HEK293 (cell line): ENCODE measurements at regions of chr7 and their contacts with region 1.

Region 1: GRCh38 chr7:56033671-56034432 is 17.4 kb downstream of the PSPH start:
- H3K4me3 ChIP-seq: peak overlapping the region; percentile 55
- H3K27ac ChIP-seq: peak overlapping the region; percentile 57
- H3K4me1 ChIP-seq: no peaks in the 10 kb centered on the region
- CTCF ChIP-seq: no peak

Region 2: DNA sequence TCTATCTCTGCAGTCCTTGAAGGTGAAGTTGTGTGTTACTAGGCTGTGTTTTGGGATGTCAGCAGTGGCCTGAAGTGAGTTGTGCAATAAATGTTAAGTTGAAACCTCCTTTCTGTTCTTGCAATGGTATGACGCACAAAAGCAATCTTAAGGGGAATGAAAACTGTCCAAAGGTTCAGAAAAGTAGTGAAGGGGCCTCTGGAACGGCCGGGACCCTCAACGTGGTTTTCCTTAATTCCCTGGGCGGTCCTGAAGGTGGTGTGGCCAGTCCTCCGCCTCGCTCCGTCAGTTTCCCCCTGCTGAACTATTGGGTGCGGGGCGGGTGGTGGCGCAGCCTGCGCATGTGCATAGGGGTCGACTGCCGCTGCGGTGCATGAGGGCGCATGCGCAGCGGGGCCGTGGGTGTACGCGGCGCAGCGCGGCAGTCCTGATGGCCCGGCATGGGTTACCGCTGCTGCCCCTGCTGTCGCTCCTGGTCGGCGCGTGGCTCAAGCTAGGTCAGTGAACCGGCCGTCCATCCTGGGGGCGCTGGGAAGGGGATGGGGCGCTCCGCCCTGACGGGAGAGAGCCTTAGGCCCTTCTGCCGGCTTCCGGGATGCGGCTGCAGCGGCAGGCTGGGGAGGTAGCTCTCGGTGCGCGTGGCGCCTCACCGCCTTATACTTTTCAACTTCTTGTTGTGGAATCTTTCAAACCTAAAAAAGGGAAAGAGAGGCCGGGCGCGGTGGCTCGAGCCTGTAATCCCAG is 30.2 kb after region 1 on chr7 and contains the start of gene SUMF2:
- CTCF ChIA-PET with region 1: no interaction called
- POLR2A ChIA-PET with region 1: interaction called, 17 read pairs
- H3K4me3 ChIP-seq: peak within 1 kb of the TSS; percentile 90
- H3K27ac ChIP-seq: peak within 1 kb of the TSS; percentile 76
- H3K4me1 ChIP-seq: peaks cover 11% of the 10 kb centered on the region
- CTCF ChIP-seq: peak; percentile 82

Region 3: DNA sequence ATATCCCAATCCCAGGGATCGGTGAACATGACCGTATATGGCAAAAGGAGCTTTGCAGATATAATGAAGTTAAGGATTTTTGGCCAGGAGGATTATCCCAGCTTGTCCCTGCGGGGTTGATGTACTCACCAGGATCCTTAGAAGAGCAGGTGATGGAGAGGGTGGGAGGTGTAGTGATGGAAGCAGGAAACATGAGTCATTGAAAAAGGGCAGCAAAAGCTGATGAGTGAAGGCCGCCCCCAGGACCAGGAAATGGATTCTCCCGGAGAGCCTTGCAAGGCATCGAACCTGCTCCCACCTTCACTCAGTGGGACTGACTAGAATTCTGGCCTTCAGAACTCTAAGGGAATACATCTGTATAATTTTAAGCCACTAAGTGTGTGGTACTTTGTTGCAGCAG is 87.6 kb after region 1 on chr7:
- CTCF ChIA-PET with region 1: no interaction called
- POLR2A ChIA-PET with region 1: no interaction called
- H3K4me3 ChIP-seq: no peak overlapping the region
- H3K27ac ChIP-seq: no peak overlapping the region
- H3K4me1 ChIP-seq: no peaks in the 10 kb centered on the region
- CTCF ChIP-seq: no peak